ENCODE measurements at regions of chr16 and their contacts with region 1.

Region 1: GRCh38 chr16:69754469-69755310 is at the start of gene NOB1:
- DNase-seq: peak; percentile 96 to 99 (median 97)
- H3K4me3 ChIP-seq: peak within 1 kb of the TSS; percentile 98
- H3K4me3 Mint-ChIP-seq: peak within 1 kb of the TSS; percentile 97 to 100 (median 100)
- H3K27ac ChIP-seq: peak within 1 kb of the TSS; percentile 86
- H3K27ac Mint-ChIP-seq: peak within 1 kb of the TSS; percentile 94 to 99 (median 99)
- H3K4me1 ChIP-seq: peaks cover 14% of the 10 kb centered on the region
- H3K4me1 Mint-ChIP-seq: peaks cover 23 to 37% (median 26%) of the 10 kb centered on the region in 3 donors
- H3K27me3 ChIP-seq: no peaks in the 10 kb centered on the region
- H3K27me3 Mint-ChIP-seq: peaks cover 0 to 1% of the 10 kb centered on the region in 2 donors
- total RNA-seq, gene NOB1: 129 to 137 TPM

Region 2: GRCh38 chr16:69396187-69397061 is 358.3 kb before region 1 on chr16:
- CTCF ChIA-PET with region 1: interaction called, 19 read pairs
- POLR2A ChIA-PET with region 1: no interaction called
- DNase-seq: peak; percentile 58 to 75 (median 62)
- H3K4me3 ChIP-seq: no peak overlapping the region
- H3K4me3 Mint-ChIP-seq: peak overlapping the region in 1 of 7 donors; percentile 2
- H3K27ac ChIP-seq: no peak overlapping the region
- H3K27ac Mint-ChIP-seq: peak overlapping the region in 6 of 8 donors; percentile 8 to 76 (median 45)
- H3K4me1 ChIP-seq: peaks cover 6% of the 10 kb centered on the region
- H3K4me1 Mint-ChIP-seq: peaks cover 3 to 10% (median 9%) of the 10 kb centered on the region in 3 donors
- H3K27me3 ChIP-seq: no peaks in the 10 kb centered on the region
- H3K27me3 Mint-ChIP-seq: peaks cover 0 to 4% of the 10 kb centered on the region in 2 donors

Region 3: DNA sequence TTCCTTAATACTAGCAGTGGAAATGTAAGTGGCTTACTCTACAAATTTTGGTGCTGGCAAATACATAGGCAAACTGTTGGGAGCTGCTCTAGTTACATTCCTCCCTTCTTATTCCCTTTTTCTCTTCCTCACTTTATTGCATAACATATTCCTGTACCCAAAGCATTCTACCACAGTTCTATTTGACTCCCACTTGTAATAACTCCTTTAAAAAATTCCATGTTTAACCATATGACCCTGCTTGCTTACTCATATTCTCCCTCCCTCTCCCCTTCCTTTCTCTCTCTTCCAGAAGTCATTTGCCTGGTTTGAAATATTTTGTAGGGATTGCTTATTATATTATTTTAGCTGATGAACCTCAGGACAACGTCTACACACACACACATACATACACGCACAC is 51.1 kb before region 1 on chr16:
- CTCF ChIA-PET with region 1: interaction called, 96 read pairs
- POLR2A ChIA-PET with region 1: interaction called, 4 read pairs
- DNase-seq: no peak
- H3K4me3 ChIP-seq: no peak overlapping the region
- H3K4me3 Mint-ChIP-seq: no peak overlapping the region
- H3K27ac ChIP-seq: no peak overlapping the region
- H3K27ac Mint-ChIP-seq: peak overlapping the region in 4 of 8 donors; percentile 6 to 59 (median 25)
- H3K4me1 ChIP-seq: no peaks in the 10 kb centered on the region
- H3K4me1 Mint-ChIP-seq: peaks cover 0 to 4% (median 0%) of the 10 kb centered on the region in 3 donors
- H3K27me3 ChIP-seq: no peaks in the 10 kb centered on the region
- H3K27me3 Mint-ChIP-seq: no peaks in the 10 kb centered on the region

Region 4: DNA sequence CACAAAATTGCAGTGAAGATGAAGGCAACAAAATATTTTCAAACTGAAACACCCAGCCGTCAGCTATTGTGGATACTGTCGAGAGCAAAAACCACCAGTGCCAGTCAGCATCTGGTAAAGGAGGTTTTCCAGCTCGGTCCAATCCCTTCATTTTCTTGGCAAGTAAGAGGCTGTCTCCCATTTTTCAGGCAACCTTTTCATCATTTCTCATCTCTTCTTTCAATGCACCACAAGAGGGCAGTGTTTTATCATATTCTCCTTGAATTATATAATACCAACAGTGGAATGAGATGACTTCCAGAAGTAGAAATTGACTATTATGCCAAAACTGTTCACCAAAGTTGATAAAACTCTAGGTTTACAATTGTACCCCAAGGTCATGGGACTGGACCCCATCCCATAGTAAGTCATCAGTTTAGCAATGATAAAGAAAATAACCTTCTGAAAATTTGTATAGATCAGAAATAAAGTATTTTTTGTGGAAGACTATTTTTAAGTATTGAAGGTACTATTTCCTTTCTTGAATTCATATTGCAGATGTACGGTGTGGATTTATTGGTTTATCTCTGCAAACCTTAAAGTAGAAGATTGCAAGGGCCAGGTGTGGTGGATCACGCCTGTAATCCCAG is 45.1 kb before region 1 on chr16:
- CTCF ChIA-PET with region 1: interaction called, 96 read pairs
- POLR2A ChIA-PET with region 1: interaction called, 5 read pairs
- DNase-seq: peak in 2 of 5 donors; percentile 44 to 58
- H3K4me3 ChIP-seq: no peak overlapping the region
- H3K4me3 Mint-ChIP-seq: no peak overlapping the region
- H3K27ac ChIP-seq: no peak overlapping the region
- H3K27ac Mint-ChIP-seq: peak overlapping the region in 5 of 8 donors; percentile 0 to 79 (median 31)
- H3K4me1 ChIP-seq: no peaks in the 10 kb centered on the region
- H3K4me1 Mint-ChIP-seq: peaks cover 0 to 6% (median 5%) of the 10 kb centered on the region in 3 donors
- H3K27me3 ChIP-seq: no peaks in the 10 kb centered on the region
- H3K27me3 Mint-ChIP-seq: no peaks in the 10 kb centered on the region

Region 5: GRCh38 chr16:69726296-69727060 is 28.2 kb before region 1 on chr16 and contains the start of gene NQO1:
- CTCF ChIA-PET with region 1: interaction called, 58 read pairs
- POLR2A ChIA-PET with region 1: interaction called, 19 read pairs
- DNase-seq: peak; percentile 68 to 90 (median 80)
- H3K4me3 ChIP-seq: peak within 1 kb of the TSS; percentile 74
- H3K4me3 Mint-ChIP-seq: peak within 1 kb of the TSS; percentile 83 to 96 (median 93)
- H3K27ac ChIP-seq: peak within 1 kb of the TSS; percentile 74
- H3K27ac Mint-ChIP-seq: peak within 1 kb of the TSS; percentile 72 to 96 (median 92)
- H3K4me1 ChIP-seq: peaks cover 16% of the 10 kb centered on the region
- H3K4me1 Mint-ChIP-seq: peaks cover 16 to 31% (median 17%) of the 10 kb centered on the region in 3 donors
- H3K27me3 ChIP-seq: no peaks in the 10 kb centered on the region
- H3K27me3 Mint-ChIP-seq: no peaks in the 10 kb centered on the region
- total RNA-seq, gene NQO1: 16.0 to 16.9 TPM

Region 6: GRCh38 chr16:69767459-69768229 is 13.0 kb after region 1 on chr16:
- CTCF ChIA-PET with region 1: interaction called, 11 read pairs
- POLR2A ChIA-PET with region 1: interaction called, 7 read pairs
- DNase-seq: no peak
- H3K4me3 ChIP-seq: no peak overlapping the region
- H3K4me3 Mint-ChIP-seq: no peak overlapping the region
- H3K27ac ChIP-seq: no peak overlapping the region
- H3K27ac Mint-ChIP-seq: peak overlapping the region in 5 of 8 donors; percentile 1 to 72 (median 24)
- H3K4me1 ChIP-seq: peaks cover 16% of the 10 kb centered on the region
- H3K4me1 Mint-ChIP-seq: peaks cover 42 to 76% (median 66%) of the 10 kb centered on the region in 3 donors
- H3K27me3 ChIP-seq: no peaks in the 10 kb centered on the region
- H3K27me3 Mint-ChIP-seq: no peaks in the 10 kb centered on the region

Region 7: DNA sequence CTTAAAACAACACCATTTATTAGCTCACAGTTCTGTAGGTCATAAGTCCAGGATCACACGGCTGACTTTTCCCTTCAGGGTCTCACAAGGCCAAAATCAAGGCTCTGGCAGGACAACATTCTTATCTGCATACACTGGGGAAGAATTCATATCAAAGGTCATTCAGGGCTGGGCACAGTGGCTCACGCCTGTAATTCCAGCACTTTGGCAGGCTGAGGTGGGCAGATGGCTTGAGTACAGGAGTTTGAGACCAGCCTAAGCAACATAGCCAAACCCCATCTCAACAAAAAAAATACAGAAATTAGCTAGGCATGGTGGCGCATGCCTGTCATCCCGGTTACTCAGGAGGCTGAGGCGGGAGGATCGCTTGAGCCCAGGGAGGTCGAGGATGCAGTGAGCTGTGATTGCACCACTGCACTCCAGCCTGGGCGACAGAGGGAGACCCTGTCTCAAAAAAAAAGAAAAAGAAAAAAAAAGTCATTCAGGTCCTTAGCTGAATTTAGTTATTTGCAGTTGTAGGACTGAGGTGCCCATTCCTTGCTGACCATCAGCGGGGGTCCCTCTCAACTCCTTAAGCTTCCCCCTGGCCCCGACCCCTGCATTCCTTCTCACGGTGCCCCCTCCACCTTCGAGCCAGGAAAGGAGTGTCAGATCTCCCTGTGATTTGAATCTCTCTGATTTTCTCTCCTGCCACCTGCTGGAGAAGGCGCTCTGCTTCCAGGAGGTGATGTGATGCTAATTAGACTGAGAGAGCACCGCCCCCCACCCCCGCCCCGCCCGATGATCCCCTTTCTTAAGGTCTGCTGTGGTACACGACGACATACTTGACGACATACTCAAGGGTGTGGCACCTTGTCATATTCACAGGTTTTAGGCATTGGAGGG is 104.7 kb after region 1 on chr16:
- CTCF ChIA-PET with region 1: no interaction called
- POLR2A ChIA-PET with region 1: no interaction called
- DNase-seq: no peak
- H3K4me3 ChIP-seq: no peak overlapping the region
- H3K4me3 Mint-ChIP-seq: no peak overlapping the region
- H3K27ac ChIP-seq: no peak overlapping the region
- H3K27ac Mint-ChIP-seq: peak overlapping the region in 4 of 8 donors; percentile 37 to 65 (median 52)
- H3K4me1 ChIP-seq: no peaks in the 10 kb centered on the region
- H3K4me1 Mint-ChIP-seq: peaks cover 0 to 10% (median 9%) of the 10 kb centered on the region in 3 donors
- H3K27me3 ChIP-seq: no peaks in the 10 kb centered on the region
- H3K27me3 Mint-ChIP-seq: peaks cover 0 to 2% of the 10 kb centered on the region in 2 donors